AG04450 (cell line): ENCODE measurements at regions of chr1 and their contacts with region 1.

Region 1: DNA sequence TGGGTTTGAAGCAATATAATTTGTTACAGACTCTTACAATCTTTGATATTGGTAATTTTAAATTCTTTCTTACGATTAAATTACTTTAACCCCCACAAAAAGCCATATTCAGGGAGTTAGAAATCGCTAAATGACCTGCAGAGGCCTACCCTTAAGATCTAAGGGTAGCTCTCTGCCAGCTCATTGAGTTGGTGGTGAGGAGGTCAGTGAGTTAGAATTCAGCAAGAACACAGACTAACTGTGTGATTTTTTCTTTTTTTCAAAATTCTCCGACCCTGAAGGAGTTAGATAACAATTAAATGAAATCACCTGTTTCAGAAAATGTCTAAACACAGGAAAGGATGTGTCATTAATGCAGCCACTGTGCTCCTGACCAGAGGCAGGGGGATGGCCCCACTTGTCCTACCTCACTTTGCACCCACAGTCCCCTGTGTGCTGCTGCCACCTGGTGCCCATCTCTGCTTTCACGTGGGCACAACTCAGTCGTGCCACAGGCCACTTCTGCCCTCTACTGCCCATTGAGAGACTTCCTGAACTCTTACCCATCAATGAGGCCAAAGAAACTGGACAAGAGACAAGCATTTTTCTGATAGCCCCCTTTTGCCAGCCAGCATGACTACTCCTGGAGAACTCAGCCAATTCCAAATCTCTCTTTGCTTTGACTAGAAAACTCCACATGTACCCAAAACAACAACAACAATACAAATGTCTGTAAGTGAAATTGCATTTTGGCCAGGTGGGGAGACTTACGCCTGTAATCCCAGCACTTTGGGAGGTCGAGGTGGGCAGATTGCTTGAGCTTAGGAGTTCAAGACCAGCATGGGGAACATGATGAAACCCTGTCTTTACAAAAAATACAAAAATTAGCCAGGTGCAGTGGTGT is 8.4 kb downstream of the CFAP45 start:
- DNase-seq: peak; percentile 81
- H3K4me3 ChIP-seq: no peak overlapping the region
- H3K27ac ChIP-seq: no peak overlapping the region
- H3K27me3 ChIP-seq: no peaks in the 10 kb centered on the region
- CTCF ChIP-seq: peak; percentile 97

Region 2: GRCh38 chr1:159780583-159781582 is 110.6 kb before region 1 on chr1 and contains the start of gene DUSP23:
- CTCF ChIA-PET with region 1: interaction called, 98 read pairs
- POLR2A ChIA-PET with region 1: no interaction called
- DNase-seq: peak; percentile 94
- H3K4me3 ChIP-seq: peak within 1 kb of the TSS; percentile 74
- H3K27ac ChIP-seq: no peak within 1 kb of the TSS
- H3K27me3 ChIP-seq: peaks cover 4% of the 10 kb centered on the region
- CTCF ChIP-seq: peak; percentile 96
- polyA plus RNA-seq, gene DUSP23: 6.0 and 6.1 TPM in 2 replicates

Region 3: GRCh38 chr1:159798893-159799292 is 92.6 kb before region 1 on chr1:
- CTCF ChIA-PET with region 1: interaction called, 556 read pairs
- POLR2A ChIA-PET with region 1: interaction called, 5 read pairs
- DNase-seq: peak; percentile 66
- H3K4me3 ChIP-seq: no peak overlapping the region
- H3K27ac ChIP-seq: no peak overlapping the region
- H3K27me3 ChIP-seq: peaks cover 26% of the 10 kb centered on the region
- CTCF ChIP-seq: peak; percentile 81

Region 4: DNA sequence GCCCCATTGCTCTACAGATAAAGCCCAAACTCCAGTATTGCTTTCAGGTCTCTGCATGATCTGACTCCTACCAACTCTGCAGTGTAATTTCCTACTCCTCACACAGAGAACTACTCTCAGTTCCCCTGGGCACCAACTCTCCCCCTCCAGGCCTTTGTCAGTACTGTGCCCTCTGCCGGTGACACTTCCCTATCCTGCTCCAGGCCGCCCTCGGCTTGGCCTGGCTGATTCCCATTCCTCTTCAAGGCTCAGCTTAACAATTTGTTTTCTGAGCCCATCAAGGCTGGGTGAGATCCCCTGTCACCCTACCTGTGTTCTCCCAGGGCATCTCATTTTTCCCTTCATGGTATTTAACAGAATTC is 62.3 kb before region 1 on chr1:
- CTCF ChIA-PET with region 1: interaction called, 10 read pairs
- POLR2A ChIA-PET with region 1: no interaction called
- DNase-seq: no peak
- H3K4me3 ChIP-seq: no peak overlapping the region
- H3K27ac ChIP-seq: no peak overlapping the region
- H3K27me3 ChIP-seq: peaks cover 4% of the 10 kb centered on the region
- CTCF ChIP-seq: peak; percentile 18

Region 5: DNA sequence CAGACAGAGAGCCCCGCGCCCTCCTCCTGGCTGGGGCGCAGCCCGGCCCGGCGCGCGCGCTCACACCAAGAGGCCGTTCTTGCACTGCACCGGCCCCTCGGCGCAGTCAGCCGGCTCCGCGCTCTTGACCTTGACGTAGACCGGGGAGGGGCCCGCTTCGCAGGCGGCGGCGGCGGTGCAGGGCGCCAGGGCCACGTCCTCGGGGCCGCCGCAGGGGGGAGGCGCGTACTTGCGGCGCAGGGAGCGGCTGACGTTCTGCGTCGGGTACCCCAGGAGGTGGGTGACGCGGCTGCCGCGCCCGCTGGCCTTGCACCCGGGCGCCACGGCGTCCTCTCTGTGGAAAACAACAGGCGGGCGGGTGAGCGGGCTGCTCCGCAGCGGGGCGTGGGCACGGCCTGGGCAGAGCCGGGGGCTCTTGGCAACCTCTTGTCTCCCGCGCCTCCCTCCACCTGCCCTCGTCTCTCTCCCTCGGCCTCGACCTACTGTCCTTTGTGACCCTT is 36.8 kb before region 1 on chr1:
- CTCF ChIA-PET with region 1: interaction called, 48 read pairs
- POLR2A ChIA-PET with region 1: interaction called, 4 read pairs
- DNase-seq: peak; percentile 42
- H3K4me3 ChIP-seq: peak overlapping the region; percentile 64
- H3K27ac ChIP-seq: peak overlapping the region; percentile 89
- H3K27me3 ChIP-seq: no peaks in the 10 kb centered on the region
- CTCF ChIP-seq: no peak

Region 6: GRCh38 chr1:160131803-160132565 is 240.5 kb after region 1 on chr1:
- CTCF ChIA-PET with region 1: no interaction called
- POLR2A ChIA-PET with region 1: no interaction called
- DNase-seq: no peak
- H3K4me3 ChIP-seq: no peak overlapping the region
- H3K27ac ChIP-seq: no peak overlapping the region
- H3K27me3 ChIP-seq: peaks cover 15% of the 10 kb centered on the region
- CTCF ChIP-seq: no peak